H1 (cell line): ENCODE measurements at regions of chr17 and their contacts with region 1.

Region 1: DNA sequence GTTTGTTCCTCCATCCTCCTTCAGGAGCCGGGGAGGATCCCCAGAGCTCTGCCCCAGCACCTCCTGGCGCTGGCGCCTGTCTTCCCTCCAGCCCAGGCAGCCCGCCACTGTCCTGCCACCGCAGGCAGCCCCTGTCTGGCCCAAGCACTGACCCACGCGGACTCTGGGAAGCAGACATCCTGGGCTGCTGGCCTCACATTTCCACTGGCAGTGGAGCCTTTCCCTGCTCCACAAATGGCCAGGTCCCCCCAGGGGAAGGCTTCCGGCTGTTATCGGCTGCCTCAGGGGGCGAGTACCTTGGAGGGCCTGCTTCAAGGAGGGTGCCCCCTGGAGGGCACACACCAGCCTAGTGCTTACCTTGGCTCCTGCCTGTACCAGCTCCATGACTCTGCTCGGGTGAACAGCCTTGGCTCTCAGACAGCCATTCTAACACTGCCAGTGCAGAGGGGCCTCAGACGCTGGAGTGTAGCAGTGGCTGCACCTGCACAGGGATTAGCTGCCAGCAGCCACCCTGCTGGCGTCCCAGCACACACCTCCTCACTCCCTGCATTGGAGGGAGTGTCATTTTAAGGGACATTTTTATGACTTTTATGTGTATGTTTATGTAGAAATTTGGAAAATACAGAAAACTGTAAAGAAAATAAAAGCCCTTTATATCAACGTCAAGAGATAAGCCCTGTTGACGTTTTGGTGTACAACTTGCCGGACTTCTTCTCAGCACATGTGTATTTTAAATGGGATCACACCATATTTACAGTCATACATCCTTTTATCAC is 21.0 kb downstream of the ACE start:
- DNase-seq: peak in 1 of 2 experiments; percentile 81
- H3K4me3 ChIP-seq: no peak overlapping the region
- H3K27ac ChIP-seq: no peak overlapping the region
- H3K4me1 ChIP-seq: peaks cover 0 to 6% (median 0%) of the 10 kb centered on the region in 4 experiments; a peak in 1 of 7 replicates
- H3K27me3 ChIP-seq: no peaks in the 10 kb centered on the region
- CTCF ChIP-seq: peak; percentile 39 to 61 (median 51)
- EP300 ChIP-seq: no peak
- POLR2A ChIP-seq: no peak
- RAD21 ChIP-seq: peak; percentile 12 to 38; a peak in 3 of 4 replicates

Region 2: DNA sequence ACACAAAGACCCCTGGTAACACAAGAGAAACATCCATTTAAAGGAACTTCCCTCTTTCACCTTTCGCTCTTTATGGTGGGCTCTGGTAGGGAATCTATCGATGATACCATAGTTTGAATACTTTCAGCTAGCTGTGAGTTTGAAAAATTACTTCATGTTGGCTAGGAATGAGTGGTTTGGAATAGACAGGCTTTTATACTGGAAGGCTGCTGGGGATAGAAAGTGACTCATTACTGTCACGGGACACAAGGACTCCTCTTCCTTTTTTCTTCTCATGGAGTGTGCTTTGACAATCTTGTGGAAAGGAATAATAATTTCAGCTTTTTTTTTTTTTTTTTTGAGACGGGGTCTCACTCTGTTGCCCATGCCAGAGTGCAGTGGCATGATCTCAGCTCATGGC is 128.7 kb before region 1 on chr17:
- CTCF ChIA-PET with region 1: no interaction called
- POLR2A ChIA-PET with region 1: no interaction called
- DNase-seq: no peak
- H3K4me3 ChIP-seq: no peak overlapping the region
- H3K27ac ChIP-seq: no peak overlapping the region
- H3K4me1 ChIP-seq: no peaks in the 10 kb centered on the region
- H3K27me3 ChIP-seq: no peaks in the 10 kb centered on the region
- CTCF ChIP-seq: no peak
- EP300 ChIP-seq: no peak
- POLR2A ChIP-seq: no peak
- RAD21 ChIP-seq: no peak

Region 3: DNA sequence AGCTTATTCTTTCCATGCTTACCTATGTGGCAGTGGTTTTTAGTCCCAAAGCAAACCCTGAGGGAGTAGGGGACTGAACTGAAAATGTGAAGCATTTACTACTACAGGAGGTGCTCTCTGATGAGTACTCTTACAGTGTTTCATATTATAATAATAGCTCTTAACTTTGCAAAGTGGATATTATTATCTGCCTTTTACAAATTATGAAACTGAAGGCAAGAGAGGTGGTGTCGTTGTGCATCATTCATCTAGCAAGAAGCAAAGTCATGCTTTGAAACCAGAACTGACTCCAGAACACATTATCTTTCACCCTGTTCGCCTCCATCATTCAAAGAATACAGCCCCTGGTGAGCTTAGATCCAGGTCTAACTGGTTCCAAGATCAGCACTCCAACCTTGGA is 17.1 kb after region 1 on chr17:
- CTCF ChIA-PET with region 1: interaction called, 25 read pairs
- POLR2A ChIA-PET with region 1: no interaction called
- DNase-seq: no peak
- H3K4me3 ChIP-seq: no peak overlapping the region
- H3K27ac ChIP-seq: no peak overlapping the region
- H3K4me1 ChIP-seq: no peaks in the 10 kb centered on the region; a peak in 1 of 7 replicates
- H3K27me3 ChIP-seq: no peaks in the 10 kb centered on the region
- CTCF ChIP-seq: no peak
- EP300 ChIP-seq: no peak
- POLR2A ChIP-seq: no peak
- RAD21 ChIP-seq: no peak

Region 4: GRCh38 chr17:63579540-63580001 is 81.7 kb after region 1 on chr17:
- CTCF ChIA-PET with region 1: no interaction called
- POLR2A ChIA-PET with region 1: no interaction called
- DNase-seq: no peak
- H3K4me3 ChIP-seq: no peak overlapping the region
- H3K27ac ChIP-seq: peak overlapping the region; percentile 6
- H3K4me1 ChIP-seq: peaks cover 0 to 6% (median 3%) of the 10 kb centered on the region in 4 experiments; a peak in 4 of 7 replicates
- H3K27me3 ChIP-seq: no peaks in the 10 kb centered on the region
- CTCF ChIP-seq: no peak
- EP300 ChIP-seq: no peak
- POLR2A ChIP-seq: no peak
- RAD21 ChIP-seq: no peak